Activated naive CD4-positive, alpha-beta T cell treated with anti-CD3 and anti-CD28 coated beads for 36 hours (primary cell): ENCODE measurements at regions of chr1 and their contacts with region 1.

Region 1: GRCh38 chr1:47437447-47438164 is at the start of gene FOXD2:
- DNase-seq: peak; percentile 90
- H3K4me3 Mint-ChIP-seq: peak within 1 kb of the TSS; percentile 92
- H3K27ac Mint-ChIP-seq: peak within 1 kb of the TSS; percentile 53
- H3K4me1 Mint-ChIP-seq: peaks cover 24% of the 10 kb centered on the region
- H3K27me3 Mint-ChIP-seq: peaks cover 37% of the 10 kb centered on the region
- total RNA-seq, gene FOXD2: 0.12 to 0.19 TPM

Region 2: DNA sequence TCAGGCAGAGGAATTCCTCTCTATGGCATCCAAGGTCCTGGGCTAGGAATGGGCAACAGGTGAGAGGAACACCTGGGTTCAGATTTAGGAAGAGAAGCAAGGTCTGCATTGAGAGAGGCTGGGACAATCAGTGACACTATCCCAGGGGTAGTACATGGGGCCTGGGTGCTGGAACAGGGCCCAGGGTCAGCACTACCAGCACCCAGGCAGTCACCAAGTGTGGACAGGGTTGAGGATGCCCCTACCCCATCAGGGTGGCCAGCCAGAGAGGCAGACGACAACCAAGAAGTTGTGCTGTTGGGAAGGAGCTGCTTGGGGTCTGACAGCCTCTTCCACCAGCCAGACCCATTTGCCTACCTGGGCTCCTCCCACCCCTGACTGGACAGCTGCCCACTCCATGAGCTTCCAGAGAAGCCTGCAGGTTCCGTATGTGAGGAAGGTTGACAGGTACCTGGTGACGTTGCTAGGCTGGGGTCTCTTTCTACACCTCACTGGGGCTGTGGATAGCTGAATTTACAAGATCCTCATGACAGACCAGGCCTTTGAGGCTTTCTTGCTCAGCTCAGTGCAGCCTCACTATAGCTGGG is 510.3 kb before region 1 on chr1:
- CTCF ChIA-PET with region 1: no interaction called
- intact Hi-C with region 1: no loop called
- DNase-seq: no peak
- H3K4me3 Mint-ChIP-seq: no peak overlapping the region
- H3K27ac Mint-ChIP-seq: no peak overlapping the region
- H3K4me1 Mint-ChIP-seq: no peaks in the 10 kb centered on the region
- H3K27me3 Mint-ChIP-seq: peaks cover 36% of the 10 kb centered on the region

Region 3: DNA sequence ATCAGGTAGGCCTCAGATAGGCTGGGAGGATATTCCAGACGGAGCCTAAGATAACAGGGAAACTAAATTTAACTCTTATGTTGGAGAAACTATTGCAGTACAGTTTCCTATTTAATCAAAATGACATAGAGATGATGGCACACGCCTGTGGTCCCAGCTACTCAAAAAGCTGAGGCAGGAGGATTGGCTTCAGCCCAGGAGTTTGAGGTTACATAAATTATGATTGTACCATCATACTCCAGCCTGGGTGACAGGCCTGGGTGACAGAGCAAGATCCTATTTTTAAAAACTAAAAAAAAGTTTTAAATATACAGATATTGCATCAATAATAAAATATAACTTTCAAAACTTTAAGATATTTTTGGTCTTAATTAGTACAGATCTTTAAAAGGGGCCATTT is 180.4 kb before region 1 on chr1:
- CTCF ChIA-PET with region 1: no interaction called
- intact Hi-C with region 1: no loop called
- DNase-seq: no peak
- H3K4me3 Mint-ChIP-seq: no peak overlapping the region
- H3K27ac Mint-ChIP-seq: no peak overlapping the region
- H3K4me1 Mint-ChIP-seq: no peaks in the 10 kb centered on the region
- H3K27me3 Mint-ChIP-seq: no peaks in the 10 kb centered on the region

Region 4: GRCh38 chr1:47298025-47298699 is 139.4 kb before region 1 on chr1:
- CTCF ChIA-PET with region 1: no interaction called
- intact Hi-C with region 1: no loop called
- DNase-seq: no peak
- H3K4me3 Mint-ChIP-seq: no peak overlapping the region
- H3K27ac Mint-ChIP-seq: no peak overlapping the region
- H3K4me1 Mint-ChIP-seq: no peaks in the 10 kb centered on the region
- H3K27me3 Mint-ChIP-seq: no peaks in the 10 kb centered on the region

Region 5: GRCh38 chr1:47313915-47314664 is 123.5 kb before region 1 on chr1 and contains the start of gene STIL:
- CTCF ChIA-PET with region 1: interaction called, 9 read pairs
- intact Hi-C with region 1: loop called (anchors 5 kb)
- DNase-seq: peak; percentile 99
- H3K4me3 Mint-ChIP-seq: peak within 1 kb of the TSS; percentile 96
- H3K27ac Mint-ChIP-seq: peak within 1 kb of the TSS; percentile 95
- H3K4me1 Mint-ChIP-seq: peaks cover 10% of the 10 kb centered on the region
- H3K27me3 Mint-ChIP-seq: no peaks in the 10 kb centered on the region
- total RNA-seq, gene STIL: 41.4 to 43.5 TPM

Region 6: DNA sequence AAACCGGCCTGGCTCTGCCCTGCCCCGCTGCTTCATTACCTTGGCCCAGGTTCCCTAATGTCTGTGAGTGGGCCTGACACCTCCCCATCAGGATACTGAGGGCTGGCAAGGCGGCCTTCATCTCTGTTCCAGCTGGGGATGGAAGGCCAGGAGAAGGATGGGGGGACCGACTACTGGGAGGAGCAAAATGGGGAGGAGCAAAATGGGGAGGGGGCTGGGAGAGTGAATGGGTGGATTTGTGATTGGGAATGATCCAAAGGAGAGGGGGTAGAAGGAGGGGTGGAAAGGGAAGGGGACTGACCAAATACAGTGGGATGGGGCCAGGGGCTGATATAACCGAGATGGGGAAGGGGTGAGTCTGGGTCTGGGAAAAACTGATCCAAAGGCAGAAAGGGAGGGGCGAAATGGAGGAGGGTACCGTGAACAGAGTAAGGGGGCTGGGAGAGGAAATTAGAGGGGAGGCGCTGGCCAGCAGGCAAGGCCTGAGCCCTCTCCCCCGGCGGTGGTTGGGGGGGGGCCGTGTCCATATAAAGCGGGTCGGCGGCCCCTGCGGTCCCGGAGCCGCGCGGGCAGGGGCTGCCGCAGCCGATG is 21.8 kb before region 1 on chr1 and contains the start of gene FOXE3:
- CTCF ChIA-PET with region 1: interaction called, 10 read pairs
- intact Hi-C with region 1: no loop called
- DNase-seq: no peak
- H3K4me3 Mint-ChIP-seq: peak within 1 kb of the TSS; percentile 50
- H3K27ac Mint-ChIP-seq: no peak within 1 kb of the TSS
- H3K4me1 Mint-ChIP-seq: peaks cover 6% of the 10 kb centered on the region
- H3K27me3 Mint-ChIP-seq: peaks cover 38% of the 10 kb centered on the region
- total RNA-seq, gene FOXE3: not detected

Region 7: DNA sequence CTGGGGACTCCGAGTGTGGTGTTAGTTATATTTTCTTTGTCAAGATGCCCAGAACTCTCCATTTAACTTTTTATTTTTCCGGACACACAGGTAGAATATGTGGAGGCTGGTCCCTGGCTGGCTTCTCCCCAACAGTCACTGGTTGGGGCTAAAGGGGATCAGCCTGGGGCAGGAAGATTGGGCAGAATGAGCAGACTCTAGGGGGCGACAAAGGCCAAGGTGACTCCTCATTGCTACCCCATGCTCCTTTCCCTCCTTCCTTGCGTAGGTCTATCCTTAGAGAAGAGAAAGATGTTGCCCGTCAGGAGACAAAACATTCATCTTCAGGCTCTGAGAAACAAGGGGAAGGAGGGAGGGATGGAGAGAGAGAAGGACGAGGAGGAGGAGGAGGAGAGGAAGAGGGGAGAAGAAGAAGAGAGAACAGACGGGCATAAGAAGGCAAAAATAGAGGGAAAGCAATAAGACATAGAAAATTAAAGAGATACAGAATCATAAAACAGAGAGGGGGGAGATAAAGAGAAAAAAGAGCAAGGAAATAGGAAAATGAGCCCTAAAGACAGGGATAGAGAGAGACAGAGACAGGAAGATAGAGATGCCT is 90.2 kb after region 1 on chr1:
- CTCF ChIA-PET with region 1: interaction called, 4 read pairs
- intact Hi-C with region 1: loop called (anchors 5 kb)
- DNase-seq: peak; percentile 16
- H3K4me3 Mint-ChIP-seq: no peak overlapping the region
- H3K27ac Mint-ChIP-seq: no peak overlapping the region
- H3K4me1 Mint-ChIP-seq: no peaks in the 10 kb centered on the region
- H3K27me3 Mint-ChIP-seq: peaks cover 66% of the 10 kb centered on the region

Region 8: GRCh38 chr1:47565092-47565491 is 127.5 kb after region 1 on chr1:
- CTCF ChIA-PET with region 1: no interaction called
- intact Hi-C with region 1: no loop called
- DNase-seq: no peak
- H3K4me3 Mint-ChIP-seq: no peak overlapping the region
- H3K27ac Mint-ChIP-seq: no peak overlapping the region
- H3K4me1 Mint-ChIP-seq: no peaks in the 10 kb centered on the region
- H3K27me3 Mint-ChIP-seq: peaks cover 12% of the 10 kb centered on the region

Region 9: GRCh38 chr1:47710329-47711071 is 272.9 kb after region 1 on chr1:
- CTCF ChIA-PET with region 1: interaction called, 123 read pairs
- intact Hi-C with region 1: loop called (anchors 1 kb)
- DNase-seq: peak; percentile 68
- H3K4me3 Mint-ChIP-seq: no peak overlapping the region
- H3K27ac Mint-ChIP-seq: no peak overlapping the region
- H3K4me1 Mint-ChIP-seq: peaks cover 3% of the 10 kb centered on the region
- H3K27me3 Mint-ChIP-seq: peaks cover 71% of the 10 kb centered on the region